ENCODE measurements at regions of chr6 and their contacts with region 1.

Region 1: GRCh38 chr6:24520929-24521546 is 26.3 kb downstream of the ALDH5A1 start:
- H3K4me3 ChIP-seq: no peak overlapping the region
- H3K27ac ChIP-seq: no peak overlapping the region
- H3K4me1 ChIP-seq: no peaks in the 10 kb centered on the region
- CTCF ChIP-seq: peak; percentile 39; the same call in 1 of the 2 replicates

Region 2: DNA sequence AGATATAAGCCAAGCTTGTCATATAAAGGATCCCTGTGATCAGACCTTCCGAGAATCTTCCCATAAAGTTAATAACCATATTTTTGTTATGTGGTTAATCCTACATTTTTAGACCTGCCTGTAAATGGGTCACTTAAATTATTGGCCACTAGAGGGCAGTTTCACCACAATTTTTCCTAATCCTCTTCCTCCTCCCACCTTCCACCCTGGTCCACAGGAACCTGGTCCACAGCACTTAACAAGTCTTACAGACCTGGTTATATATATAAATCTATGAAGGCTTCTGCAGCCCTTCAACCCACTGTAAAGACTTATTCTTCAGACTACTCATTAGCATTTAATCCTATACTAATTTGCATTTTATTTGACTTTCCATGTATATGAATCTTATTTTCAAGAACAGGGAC is 90.0 kb before region 1 on chr6:
- CTCF ChIA-PET with region 1: interaction called, 55 read pairs
- POLR2A ChIA-PET with region 1: no interaction called
- H3K4me3 ChIP-seq: no peak overlapping the region
- H3K27ac ChIP-seq: no peak overlapping the region
- H3K4me1 ChIP-seq: no peaks in the 10 kb centered on the region
- CTCF ChIP-seq: no peak

Region 3: GRCh38 chr6:24494821-24495795 is 25.9 kb before region 1 on chr6 and contains the start of gene ALDH5A1:
- CTCF ChIA-PET with region 1: interaction called, 27 read pairs
- POLR2A ChIA-PET with region 1: interaction called, 5 read pairs
- H3K4me3 ChIP-seq: peak within 1 kb of the TSS; percentile 60
- H3K27ac ChIP-seq: peak within 1 kb of the TSS; percentile 80
- H3K4me1 ChIP-seq: 0 out of 2 replicates have a peak, but pooled peaks cover 2% of the 10 kb centered on the region
- CTCF ChIP-seq: peak; percentile 91

Region 4: DNA sequence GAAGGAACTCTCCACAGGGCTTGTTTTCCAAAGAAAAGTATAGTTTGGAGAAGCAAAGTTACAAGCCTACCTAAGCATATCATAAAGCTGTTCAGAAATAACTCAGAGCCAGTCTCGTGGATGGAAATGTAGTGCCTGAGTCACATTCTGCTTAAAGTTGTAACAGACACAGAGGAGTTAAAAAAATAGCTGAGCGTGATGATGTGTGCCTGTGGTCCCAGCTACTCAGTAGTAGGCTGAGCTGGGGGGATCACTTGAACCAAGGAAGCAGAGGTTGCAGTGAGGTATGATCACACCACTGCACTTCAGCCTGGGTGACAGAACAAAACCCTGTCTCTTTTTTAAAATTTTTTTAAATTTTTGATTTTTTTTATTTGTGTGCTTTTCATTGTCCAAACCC is 19.7 kb before region 1 on chr6:
- CTCF ChIA-PET with region 1: interaction called, 27 read pairs
- POLR2A ChIA-PET with region 1: no interaction called
- H3K4me3 ChIP-seq: no peak overlapping the region
- H3K27ac ChIP-seq: no peak overlapping the region
- H3K4me1 ChIP-seq: no peaks in the 10 kb centered on the region
- CTCF ChIP-seq: no peak

Region 5: GRCh38 chr6:24537771-24538385 is 16.8 kb after region 1 on chr6:
- CTCF ChIA-PET with region 1: interaction called, 16 read pairs
- POLR2A ChIA-PET with region 1: no interaction called
- H3K4me3 ChIP-seq: no peak overlapping the region
- H3K27ac ChIP-seq: no peak overlapping the region
- H3K4me1 ChIP-seq: peaks cover 10% of the 10 kb centered on the region; the same call in 1 of the 2 replicates
- CTCF ChIP-seq: no peak

Region 6: GRCh38 chr6:24551139-24551538 is 30.1 kb after region 1 on chr6:
- CTCF ChIA-PET with region 1: interaction called, 16 read pairs
- POLR2A ChIA-PET with region 1: no interaction called
- H3K4me3 ChIP-seq: no peak overlapping the region
- H3K27ac ChIP-seq: no peak overlapping the region
- H3K4me1 ChIP-seq: peaks cover 2% of the 10 kb centered on the region; the same call in 1 of the 2 replicates
- CTCF ChIP-seq: no peak

Region 7: DNA sequence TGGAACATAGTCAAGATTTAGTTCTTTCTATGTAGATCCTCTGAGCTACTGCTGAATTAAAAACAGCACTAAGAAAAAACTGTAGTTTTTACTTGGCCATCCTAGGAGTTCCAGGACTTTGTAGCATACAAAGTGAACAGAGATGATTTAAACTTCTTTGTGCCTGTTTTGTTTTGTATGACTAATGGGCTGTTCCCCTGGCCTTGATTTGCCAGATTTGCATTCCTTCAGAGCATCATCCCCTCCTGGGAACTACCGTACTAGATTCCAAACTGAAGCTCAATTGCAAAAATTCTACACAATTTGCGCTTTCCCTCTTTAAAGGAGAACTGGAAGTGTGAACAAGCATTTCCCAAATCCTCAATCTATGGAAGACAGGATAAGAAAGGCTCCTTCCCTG is 168.9 kb after region 1 on chr6:
- CTCF ChIA-PET with region 1: interaction called, 14 read pairs
- POLR2A ChIA-PET with region 1: no interaction called
- H3K4me3 ChIP-seq: no peak overlapping the region
- H3K27ac ChIP-seq: no peak overlapping the region
- H3K4me1 ChIP-seq: peaks cover 4% of the 10 kb centered on the region; the same call in 1 of the 2 replicates
- CTCF ChIP-seq: no peak